CD4-positive, alpha-beta memory T cell (primary cell): ENCODE measurements at regions of chr19 and their contacts with region 1.

Region 1: DNA sequence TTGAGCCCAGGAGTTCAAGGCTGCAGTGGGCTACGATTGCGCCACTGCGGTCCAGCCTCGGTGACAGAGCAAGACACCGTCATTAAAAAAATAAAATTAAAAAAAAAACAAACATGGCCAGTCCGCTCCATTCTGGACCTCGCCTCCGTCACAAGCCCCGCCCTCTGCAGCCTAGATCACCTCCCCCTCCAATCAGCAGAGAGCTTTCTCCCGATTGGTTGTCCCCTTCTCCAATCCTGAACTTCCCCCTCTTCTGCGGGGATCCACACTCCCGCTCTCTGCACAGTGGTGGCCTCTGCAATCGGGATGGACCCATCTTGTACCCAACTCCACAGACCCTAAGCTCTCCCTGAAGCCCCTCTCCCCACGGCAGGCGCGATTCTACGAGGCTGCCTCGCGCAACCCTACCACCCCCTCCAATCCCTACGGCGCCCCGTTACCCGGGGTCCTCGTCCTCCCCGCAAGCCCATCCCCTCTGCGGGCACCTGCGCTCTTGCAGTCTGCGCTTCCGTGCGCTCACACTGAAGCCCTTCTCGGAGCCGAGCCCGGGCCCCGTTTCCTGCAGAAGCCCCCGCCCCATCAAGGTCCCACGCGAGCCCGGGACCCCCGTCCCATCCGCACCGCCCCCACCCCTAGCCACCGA is 540 bp downstream of the TMEM160 start:
- DNase-seq: peak; percentile 59 to 82 (median 63)
- H3K4me3 ChIP-seq: peak overlapping the region; percentile 61 to 71
- H3K4me3 Mint-ChIP-seq: peak overlapping the region; percentile 95 to 98 (median 97)
- H3K27ac ChIP-seq: peak overlapping the region; percentile 68
- H3K27ac Mint-ChIP-seq: peak overlapping the region; percentile 67 to 98 (median 96)
- H3K4me1 ChIP-seq: peaks cover 13% of the 10 kb centered on the region
- H3K4me1 Mint-ChIP-seq: peaks cover 7 to 21% (median 14%) of the 10 kb centered on the region in 4 donors
- H3K27me3 ChIP-seq: no peaks in the 10 kb centered on the region
- H3K27me3 Mint-ChIP-seq: no peaks in the 10 kb centered on the region

Region 2: GRCh38 chr19:46850228-46851203 is 197.4 kb before region 1 on chr19 and contains the start of gene AP2S1:
- CTCF ChIA-PET with region 1: no interaction called
- POLR2A ChIA-PET with region 1: no interaction called
- intact Hi-C with region 1: loop called (anchors 1 kb)
- DNase-seq: peak; percentile 93 to 99 (median 95)
- H3K4me3 ChIP-seq: peak within 1 kb of the TSS; percentile 62 to 86
- H3K4me3 Mint-ChIP-seq: peak within 1 kb of the TSS; percentile 78 to 97 (median 94)
- H3K27ac ChIP-seq: peak within 1 kb of the TSS; percentile 85
- H3K27ac Mint-ChIP-seq: peak within 1 kb of the TSS; percentile 62 to 96 (median 93)
- H3K4me1 ChIP-seq: peaks cover 13% of the 10 kb centered on the region
- H3K4me1 Mint-ChIP-seq: peaks cover 19 to 33% (median 24%) of the 10 kb centered on the region in 4 donors
- H3K27me3 ChIP-seq: no peaks in the 10 kb centered on the region
- H3K27me3 Mint-ChIP-seq: no peaks in the 10 kb centered on the region
- total RNA-seq, gene AP2S1: 40.7 to 42.1 TPM

Region 3: GRCh38 chr19:47144630-47145029 is 96.7 kb after region 1 on chr19:
- CTCF ChIA-PET with region 1: no interaction called
- POLR2A ChIA-PET with region 1: no interaction called
- intact Hi-C with region 1: no loop called
- DNase-seq: no peak
- H3K4me3 ChIP-seq: no peak overlapping the region
- H3K4me3 Mint-ChIP-seq: no peak overlapping the region
- H3K27ac ChIP-seq: no peak overlapping the region
- H3K27ac Mint-ChIP-seq: peak overlapping the region in 2 of 7 donors; percentile 19 to 41
- H3K4me1 ChIP-seq: peaks cover 43% of the 10 kb centered on the region
- H3K4me1 Mint-ChIP-seq: peaks cover 33 to 66% (median 46%) of the 10 kb centered on the region in 4 donors
- H3K27me3 ChIP-seq: no peaks in the 10 kb centered on the region
- H3K27me3 Mint-ChIP-seq: no peaks in the 10 kb centered on the region

Region 4: GRCh38 chr19:47256688-47257443 is 209.0 kb after region 1 on chr19:
- CTCF ChIA-PET with region 1: no interaction called
- POLR2A ChIA-PET with region 1: interaction called, 6 read pairs
- intact Hi-C with region 1: loop called (anchors 5 kb)
- DNase-seq: peak; percentile 97 to 99 (median 98)
- H3K4me3 ChIP-seq: peak overlapping the region; percentile 61 to 62
- H3K4me3 Mint-ChIP-seq: peak overlapping the region; percentile 88 to 98 (median 94)
- H3K27ac ChIP-seq: peak overlapping the region; percentile 76
- H3K27ac Mint-ChIP-seq: peak overlapping the region; percentile 94 to 99 (median 99)
- H3K4me1 ChIP-seq: peaks cover 18% of the 10 kb centered on the region
- H3K4me1 Mint-ChIP-seq: peaks cover 20 to 44% (median 31%) of the 10 kb centered on the region in 4 donors
- H3K27me3 ChIP-seq: no peaks in the 10 kb centered on the region
- H3K27me3 Mint-ChIP-seq: no peaks in the 10 kb centered on the region